ENCODE measurements at regions of chr1 and their contacts with region 1.

Region 1: GRCh38 chr1:6538956-6539355 is 15.4 kb downstream of the NOL9 start:
- DNase-seq: no peak
- ATAC-seq: no peak
- H3K4me3 ChIP-seq: no peak overlapping the region
- H3K27ac ChIP-seq: no peak overlapping the region
- H3K4me1 ChIP-seq: no peaks in the 10 kb centered on the region
- H3K27me3 ChIP-seq: no peaks in the 10 kb centered on the region
- CTCF ChIP-seq: no peak

Region 2: GRCh38 chr1:5883129-5884048 is 655.6 kb before region 1 on chr1:
- CTCF ChIA-PET with region 1: no interaction called
- POLR2A ChIA-PET with region 1: interaction called, 10 read pairs
- in situ Hi-C with region 1: no loop called
- intact Hi-C with region 1: no loop called
- DNase-seq: no peak
- ATAC-seq: no peak
- H3K4me3 ChIP-seq: no peak overlapping the region
- H3K27ac ChIP-seq: no peak overlapping the region
- H3K4me1 ChIP-seq: no peaks in the 10 kb centered on the region
- H3K27me3 ChIP-seq: no peaks in the 10 kb centered on the region
- CTCF ChIP-seq: no peak

Measured in Panc1 (cell line).